Activated CD4-positive, alpha-beta T cell treated with anti-CD3 and anti-CD28 coated beads for 36 hours (primary cell): ENCODE measurements at regions of chr2 and their contacts with region 1.

Region 1: DNA sequence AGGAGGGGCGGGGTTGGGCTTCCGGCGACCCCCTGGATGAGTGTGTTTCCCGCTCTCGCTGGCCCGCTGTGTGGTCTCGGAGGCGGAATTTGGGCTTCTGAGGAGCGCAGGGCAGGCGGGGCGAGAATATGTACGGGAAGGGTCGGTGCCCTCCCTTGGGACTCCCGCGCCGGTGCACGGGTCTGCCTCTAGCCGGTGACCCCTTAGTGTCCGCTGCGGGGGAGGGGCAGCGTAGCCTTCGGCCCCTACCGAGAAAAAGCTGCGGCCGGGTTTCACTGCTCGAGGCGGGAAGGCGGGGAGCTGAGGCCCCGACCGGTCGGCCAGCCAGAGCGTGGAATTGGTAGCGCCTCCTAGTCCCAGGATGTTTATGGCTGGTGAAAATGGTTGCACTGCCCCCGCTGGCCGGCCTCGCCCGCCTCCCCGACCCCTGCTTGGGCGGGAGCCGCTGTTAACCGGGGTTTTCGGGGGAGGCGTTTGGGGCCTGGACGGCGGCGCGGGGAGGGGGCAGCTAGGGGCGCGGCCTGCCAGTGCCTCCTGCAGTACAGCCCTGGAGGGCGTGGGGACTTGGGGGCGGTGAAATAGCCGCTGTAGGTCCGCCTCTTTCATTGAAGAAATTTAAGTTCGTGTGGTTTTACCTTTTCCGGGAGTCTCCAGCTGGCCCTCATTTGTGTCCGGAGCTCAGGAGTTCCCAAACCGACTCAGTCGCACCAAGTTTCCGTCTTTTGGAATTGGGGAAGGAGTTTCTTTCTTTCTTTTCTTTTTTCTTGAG is at the start of gene UGP2:
- DNase-seq: peak; percentile 91
- ATAC-seq: peak; percentile 72
- H3K4me3 Mint-ChIP-seq: peak within 1 kb of the TSS; percentile 92
- H3K27ac Mint-ChIP-seq: peak within 1 kb of the TSS; percentile 98
- H3K4me1 Mint-ChIP-seq: peaks cover 39% of the 10 kb centered on the region
- H3K27me3 Mint-ChIP-seq: no peaks in the 10 kb centered on the region
- total RNA-seq, gene UGP2: 98.4 to 144 TPM

Region 2: DNA sequence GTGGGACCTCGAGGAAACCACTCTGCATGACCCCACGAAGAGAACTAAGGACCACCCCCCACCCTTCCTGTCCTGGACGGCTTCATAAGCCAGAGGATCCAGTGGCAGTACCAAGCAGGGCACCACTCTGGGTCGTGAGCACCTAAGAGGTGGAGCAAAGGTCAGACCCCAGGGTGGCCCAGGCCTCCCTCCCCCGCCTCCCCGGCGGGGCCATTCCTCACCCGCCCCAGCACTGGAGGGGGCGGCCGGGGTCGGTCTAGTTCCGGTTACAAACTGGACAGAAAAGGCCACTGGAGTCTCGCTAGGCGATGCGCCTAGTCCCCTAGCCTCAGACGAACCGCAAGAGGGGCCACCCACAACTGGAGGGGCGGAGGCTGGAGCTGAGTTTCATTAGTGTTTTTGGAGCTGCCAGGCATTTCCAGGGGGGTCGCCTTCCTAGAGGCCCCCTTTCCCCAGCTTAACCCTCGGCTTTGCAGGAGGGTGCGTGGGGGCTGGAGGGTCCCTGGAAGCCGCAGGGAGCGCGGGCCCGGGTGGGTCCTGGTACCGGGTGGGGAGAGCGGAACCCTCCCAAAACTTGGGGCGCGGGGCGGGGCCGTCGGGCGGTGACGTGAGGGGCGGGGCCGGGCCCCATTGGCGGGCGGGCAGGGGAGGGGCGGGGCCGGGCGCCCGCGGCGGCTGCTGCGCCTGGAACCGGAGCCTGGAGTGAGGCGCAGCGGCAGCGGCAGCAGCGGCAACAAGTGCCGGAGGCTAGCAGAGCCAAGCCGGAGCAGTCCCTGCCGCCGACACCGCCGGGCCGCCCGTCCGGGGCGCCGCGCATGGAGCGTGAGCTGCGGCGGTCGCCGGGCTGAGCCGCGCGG is 1645.8 kb before region 1 on chr2 and contains the start of gene B3GNT2:
- CTCF ChIA-PET with region 1: no interaction called
- POLR2A ChIA-PET with region 1: no interaction called
- intact Hi-C with region 1: loop called in 1 of 2 experiments (anchors 5 kb)
- DNase-seq: peak; percentile 92
- ATAC-seq: peak; percentile 62
- H3K4me3 Mint-ChIP-seq: peak within 1 kb of the TSS; percentile 92
- H3K27ac Mint-ChIP-seq: peak within 1 kb of the TSS; percentile 92
- H3K4me1 Mint-ChIP-seq: peaks cover 28% of the 10 kb centered on the region
- H3K27me3 Mint-ChIP-seq: no peaks in the 10 kb centered on the region
- total RNA-seq, gene B3GNT2: 28.6 to 31.7 TPM

Region 3: DNA sequence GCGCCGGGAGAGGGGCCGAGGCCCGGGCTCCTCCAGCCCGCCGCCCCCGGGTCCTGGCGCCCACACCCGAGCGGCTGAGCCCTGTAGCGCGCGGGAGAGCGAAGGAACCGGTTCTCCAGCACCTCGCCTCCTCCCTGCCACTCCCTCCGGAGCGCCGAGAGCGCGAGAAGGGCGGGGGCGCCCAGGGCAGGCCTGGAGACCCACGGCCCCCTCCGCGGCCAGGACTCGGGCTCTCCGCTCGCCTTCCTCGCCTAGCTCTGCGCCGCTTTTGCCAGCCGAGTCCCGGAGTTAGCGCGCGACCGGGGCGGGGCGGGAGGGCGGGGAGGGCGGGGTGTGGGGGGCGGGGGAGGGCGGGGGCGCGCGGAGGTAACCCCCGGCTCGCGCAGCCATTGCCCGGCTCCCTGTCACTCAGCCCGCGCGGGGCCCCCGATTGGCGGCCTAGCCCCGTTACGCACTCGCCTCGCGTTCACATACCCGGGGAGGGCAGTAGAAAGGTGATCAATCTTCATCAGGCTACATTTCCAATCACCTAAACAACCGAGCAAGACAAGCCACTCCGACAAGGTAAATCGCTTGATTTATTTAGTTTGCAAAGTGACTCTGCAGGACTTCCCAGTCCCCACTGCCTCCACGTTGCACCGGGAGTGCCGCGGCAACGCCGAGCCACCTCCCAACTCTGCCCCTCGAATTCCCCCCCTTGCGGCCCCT is 791.0 kb before region 1 on chr2 and contains the start of gene OTX1:
- CTCF ChIA-PET with region 1: no interaction called
- POLR2A ChIA-PET with region 1: interaction called, 3 read pairs
- intact Hi-C with region 1: loop called in 1 of 2 experiments (anchors 5 kb)
- DNase-seq: peak; percentile 80
- ATAC-seq: peak; percentile 80
- H3K4me3 Mint-ChIP-seq: peak within 1 kb of the TSS; percentile 75
- H3K27ac Mint-ChIP-seq: peak within 1 kb of the TSS; percentile 47
- H3K4me1 Mint-ChIP-seq: peaks cover 60% of the 10 kb centered on the region
- H3K27me3 Mint-ChIP-seq: peaks cover 78% of the 10 kb centered on the region
- total RNA-seq, gene OTX1: not detected

Region 4: GRCh38 chr2:63581298-63581961 is 260.0 kb before region 1 on chr2:
- CTCF ChIA-PET with region 1: no interaction called
- POLR2A ChIA-PET with region 1: no interaction called
- intact Hi-C with region 1: no loop called
- DNase-seq: no peak
- ATAC-seq: no peak
- H3K4me3 Mint-ChIP-seq: no peak overlapping the region
- H3K27ac Mint-ChIP-seq: no peak overlapping the region
- H3K4me1 Mint-ChIP-seq: peaks cover 10% of the 10 kb centered on the region
- H3K27me3 Mint-ChIP-seq: no peaks in the 10 kb centered on the region

Region 5: DNA sequence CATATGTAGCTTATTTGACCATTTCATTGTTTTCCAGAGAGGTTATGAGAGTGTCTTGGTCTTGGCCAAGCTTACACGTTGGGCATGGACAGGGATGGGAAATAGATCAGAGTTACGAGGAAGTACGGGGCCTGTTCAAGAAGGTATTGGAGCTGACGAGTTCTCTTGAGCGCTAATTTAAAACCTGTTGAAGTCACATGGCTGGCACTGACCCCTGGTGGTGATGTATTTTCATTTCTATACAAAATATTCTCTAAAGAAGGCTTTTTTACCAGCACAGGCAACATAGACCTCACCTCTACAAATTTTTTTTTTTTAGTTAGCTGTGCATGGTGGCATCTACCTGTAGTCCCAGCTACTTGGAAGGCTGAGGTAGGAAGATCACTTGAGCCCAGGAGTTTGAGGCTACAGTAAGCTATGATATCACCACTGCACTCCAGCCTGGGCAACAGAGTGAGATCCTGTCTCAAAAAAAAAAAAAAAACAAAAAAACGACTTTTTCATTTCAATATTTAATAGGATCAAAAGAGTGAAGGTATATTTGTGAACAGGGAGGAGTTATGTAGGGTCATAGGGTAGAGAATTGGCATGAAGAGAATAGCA is 19.9 kb after region 1 on chr2:
- CTCF ChIA-PET with region 1: interaction called, 33 read pairs
- POLR2A ChIA-PET with region 1: interaction called, 14 read pairs
- intact Hi-C with region 1: loop called (anchors 1 kb)
- DNase-seq: peak; percentile 73
- ATAC-seq: peak; percentile 39
- H3K4me3 Mint-ChIP-seq: no peak overlapping the region
- H3K27ac Mint-ChIP-seq: no peak overlapping the region
- H3K4me1 Mint-ChIP-seq: peaks cover 43% of the 10 kb centered on the region
- H3K27me3 Mint-ChIP-seq: no peaks in the 10 kb centered on the region

Region 6: GRCh38 chr2:63875131-63875527 is 33.7 kb after region 1 on chr2:
- CTCF ChIA-PET with region 1: no interaction called
- POLR2A ChIA-PET with region 1: no interaction called
- intact Hi-C with region 1: no loop called
- DNase-seq: no peak
- ATAC-seq: no peak
- H3K4me3 Mint-ChIP-seq: no peak overlapping the region
- H3K27ac Mint-ChIP-seq: peak overlapping the region; percentile 51
- H3K4me1 Mint-ChIP-seq: peaks cover 20% of the 10 kb centered on the region
- H3K27me3 Mint-ChIP-seq: no peaks in the 10 kb centered on the region

Region 7: GRCh38 chr2:64144057-64145013 is 302.9 kb after region 1 on chr2 and contains the start of gene PELI1:
- CTCF ChIA-PET with region 1: no interaction called
- POLR2A ChIA-PET with region 1: no interaction called
- intact Hi-C with region 1: loop called in 1 of 2 experiments (anchors 1 kb)
- DNase-seq: peak; percentile 97
- ATAC-seq: peak; percentile 89
- H3K4me3 Mint-ChIP-seq: peak within 1 kb of the TSS; percentile 84
- H3K27ac Mint-ChIP-seq: peak within 1 kb of the TSS; percentile 97
- H3K4me1 Mint-ChIP-seq: peaks cover 30% of the 10 kb centered on the region
- H3K27me3 Mint-ChIP-seq: no peaks in the 10 kb centered on the region
- total RNA-seq, gene PELI1: 21.3 to 29.7 TPM

Region 8: GRCh38 chr2:65129826-65130663 is 1288.6 kb after region 1 on chr2 and contains the start of gene RAB1A:
- CTCF ChIA-PET with region 1: no interaction called
- POLR2A ChIA-PET with region 1: no interaction called
- intact Hi-C with region 1: loop called in 1 of 2 experiments (anchors 2 kb)
- DNase-seq: peak; percentile 100
- ATAC-seq: peak; percentile 95
- H3K4me3 Mint-ChIP-seq: peak within 1 kb of the TSS; percentile 100
- H3K27ac Mint-ChIP-seq: peak within 1 kb of the TSS; percentile 100
- H3K4me1 Mint-ChIP-seq: peaks cover 30% of the 10 kb centered on the region
- H3K27me3 Mint-ChIP-seq: no peaks in the 10 kb centered on the region
- total RNA-seq, gene RAB1A: 77.1 to 84.8 TPM

Region 9: DNA sequence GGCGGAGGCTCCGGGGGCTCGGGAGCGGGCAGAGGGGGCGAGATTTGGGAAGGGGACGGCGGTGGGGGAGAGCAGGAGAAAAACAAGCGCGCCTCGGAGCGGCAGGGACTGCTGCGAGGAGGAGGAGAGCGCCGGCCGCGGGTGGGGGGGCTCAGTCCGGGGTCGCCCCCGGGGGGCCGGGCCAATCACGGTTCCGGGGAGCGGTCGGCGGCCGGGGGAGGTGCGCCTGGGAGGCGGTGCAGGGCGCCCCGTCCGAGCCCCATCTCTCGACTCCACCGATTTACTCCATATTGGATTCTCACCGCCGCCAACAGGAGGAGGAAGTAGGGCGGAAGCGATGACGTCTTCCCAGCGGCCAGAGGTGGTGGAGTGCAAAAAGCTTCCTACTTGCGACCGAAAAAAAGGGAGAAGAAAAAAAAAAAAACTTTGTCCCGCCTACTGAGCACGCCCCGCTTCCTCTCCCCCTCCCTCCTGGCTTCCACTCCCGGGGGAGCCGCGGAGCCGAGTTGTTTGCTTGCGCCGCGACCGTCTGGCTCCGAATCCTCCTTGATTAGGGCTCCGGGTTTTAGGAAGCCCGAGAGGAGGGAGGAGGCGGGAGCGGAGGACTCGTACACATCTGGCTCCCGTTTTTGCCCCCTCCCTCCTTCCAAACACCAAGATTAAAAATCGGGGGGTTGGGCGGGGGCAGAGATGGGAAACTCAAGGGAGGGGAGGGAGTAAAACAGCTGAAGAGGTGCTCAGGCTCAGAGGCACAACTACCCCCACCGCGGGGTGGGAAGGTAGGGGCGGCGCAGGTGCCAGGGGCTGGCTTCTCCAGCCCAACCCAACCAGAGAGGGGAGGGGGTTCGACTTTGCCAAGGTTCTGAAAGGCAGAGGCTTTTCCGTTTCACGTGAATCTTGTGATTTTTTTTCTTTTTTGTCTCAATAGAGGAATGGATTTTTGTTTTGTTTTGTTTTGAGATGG is 1591.1 kb after region 1 on chr2 and contains the start of gene SPRED2:
- CTCF ChIA-PET with region 1: no interaction called
- POLR2A ChIA-PET with region 1: no interaction called
- intact Hi-C with region 1: loop called in 1 of 2 experiments (anchors 5 kb)
- DNase-seq: peak; percentile 87
- ATAC-seq: peak; percentile 50
- H3K4me3 Mint-ChIP-seq: peak within 1 kb of the TSS; percentile 85
- H3K27ac Mint-ChIP-seq: peak within 1 kb of the TSS; percentile 73
- H3K4me1 Mint-ChIP-seq: peaks cover 16% of the 10 kb centered on the region
- H3K27me3 Mint-ChIP-seq: peaks cover 23% of the 10 kb centered on the region
- total RNA-seq, gene SPRED2: 6.7 to 7.9 TPM